HepG2 (cell line): ENCODE measurements at regions of chr6 and their contacts with region 1.

Region 1: DNA sequence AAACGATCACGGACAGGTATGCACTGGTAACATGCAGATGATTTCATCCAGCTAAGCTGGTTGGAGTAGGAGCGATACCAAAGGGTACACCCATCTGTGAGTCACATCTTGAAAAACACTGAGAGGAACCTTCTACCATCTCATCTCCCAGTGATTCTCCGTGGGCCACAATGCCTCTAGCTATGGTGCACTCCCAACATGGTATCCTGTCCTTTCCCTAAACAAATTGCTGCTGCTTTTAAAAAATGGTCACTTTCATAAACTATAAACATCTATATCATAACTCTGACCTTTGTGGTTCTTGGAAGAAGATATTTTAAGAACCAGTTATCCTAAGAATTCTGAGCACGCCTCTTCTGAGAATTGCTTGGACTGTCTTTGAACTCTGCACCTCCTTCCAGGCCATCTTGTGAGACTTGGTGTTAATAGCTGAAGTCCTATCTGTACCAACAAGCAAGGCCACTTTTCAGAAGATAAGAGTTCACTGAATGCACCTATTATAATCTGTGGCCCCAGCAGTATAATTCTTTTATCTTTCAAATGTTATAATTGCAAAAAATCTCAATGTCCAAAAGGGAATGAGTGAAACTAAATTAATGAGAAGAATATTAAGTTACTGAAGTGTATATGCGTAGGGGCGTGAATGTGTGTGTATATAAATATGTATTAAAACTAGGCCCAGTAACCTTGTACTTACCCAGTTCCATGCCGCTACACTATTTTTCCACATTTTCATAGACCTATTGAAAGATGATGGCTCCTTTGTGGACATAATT is 70.5 kb upstream of the TPD52L1 start:
- DNase-seq: no peak
- ATAC-seq: no peak
- H3K4me3 ChIP-seq: no peak overlapping the region
- H3K27ac ChIP-seq: no peak overlapping the region
- H3K4me1 ChIP-seq: no peaks in the 10 kb centered on the region
- H3K27me3 ChIP-seq: no peaks in the 10 kb centered on the region
- CTCF ChIP-seq: no peak
- EP300 ChIP-seq: no peak
- POLR2A ChIP-seq: no peak
- RAD21 ChIP-seq: no peak

Region 2: GRCh38 chr6:124812067-124812466 is 271.0 kb before region 1 on chr6:
- CTCF ChIA-PET with region 1: no interaction called
- POLR2A ChIA-PET with region 1: no interaction called
- in situ Hi-C with region 1: no loop called
- intact Hi-C with region 1: no loop called
- DNase-seq: no peak
- ATAC-seq: no peak
- H3K4me3 ChIP-seq: no peak overlapping the region
- H3K27ac ChIP-seq: no peak overlapping the region
- H3K4me1 ChIP-seq: no peaks in the 10 kb centered on the region
- H3K27me3 ChIP-seq: no peaks in the 10 kb centered on the region
- CTCF ChIP-seq: no peak
- EP300 ChIP-seq: no peak
- POLR2A ChIP-seq: no peak
- RAD21 ChIP-seq: no peak

Region 3: GRCh38 chr6:124961777-124962611 is 121.1 kb before region 1 on chr6 and contains the start of gene RNF217:
- CTCF ChIA-PET with region 1: no interaction called
- POLR2A ChIA-PET with region 1: no interaction called
- in situ Hi-C with region 1: no loop called
- intact Hi-C with region 1: loop called (anchors 10 kb)
- DNase-seq: no peak
- ATAC-seq: peak; percentile 79
- H3K4me3 ChIP-seq: peak within 1 kb of the TSS; percentile 42 to 70 (median 63)
- H3K27ac ChIP-seq: no peak within 1 kb of the TSS
- H3K4me1 ChIP-seq: peaks cover 16% of the 10 kb centered on the region
- H3K27me3 ChIP-seq: peaks cover 0 to 12% of the 10 kb centered on the region in 2 experiments; a peak in 2 of 5 replicates
- CTCF ChIP-seq: no peak
- EP300 ChIP-seq: no peak
- POLR2A ChIP-seq: no peak
- RAD21 ChIP-seq: no peak
- total RNA-seq, gene RNF217: 1.2 and 2.2 TPM in 2 replicates

Region 4: GRCh38 chr6:125041740-125042459 is 41.2 kb before region 1 on chr6:
- CTCF ChIA-PET with region 1: no interaction called
- POLR2A ChIA-PET with region 1: no interaction called
- in situ Hi-C with region 1: no loop called
- intact Hi-C with region 1: loop called (anchors 2 kb)
- DNase-seq: no peak
- ATAC-seq: no peak
- H3K4me3 ChIP-seq: no peak overlapping the region
- H3K27ac ChIP-seq: no peak overlapping the region
- H3K4me1 ChIP-seq: no peaks in the 10 kb centered on the region
- H3K27me3 ChIP-seq: no peaks in the 10 kb centered on the region
- CTCF ChIP-seq: no peak
- EP300 ChIP-seq: no peak
- POLR2A ChIP-seq: no peak
- RAD21 ChIP-seq: no peak